CD4-positive, alpha-beta memory T cell (primary cell): ENCODE measurements at regions of chr17 and their contacts with region 1.

Region 1: DNA sequence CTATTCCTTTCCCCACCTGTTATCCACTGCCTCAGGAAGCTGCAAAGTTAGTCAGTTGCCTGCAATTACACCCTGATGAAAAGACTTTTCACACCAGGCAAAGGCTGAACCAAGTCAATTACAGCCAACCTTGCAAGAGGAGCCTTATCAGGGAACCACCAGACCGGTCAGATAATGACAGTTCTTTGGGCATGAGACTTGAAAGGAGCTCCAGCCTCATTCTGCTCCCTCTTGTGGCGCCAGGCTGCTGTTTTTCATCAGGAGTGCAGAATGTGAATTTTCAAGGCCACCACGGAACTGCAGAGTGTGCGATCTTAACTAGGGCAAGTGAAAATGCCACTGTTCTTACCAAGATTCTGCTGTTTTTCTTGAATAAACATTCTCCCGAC is 22.5 kb downstream of the DNAI2 start:
- DNase-seq: peak in 4 of 5 donors; percentile 43 to 46 (median 44)
- H3K4me3 ChIP-seq: no peak overlapping the region
- H3K4me3 Mint-ChIP-seq: peak overlapping the region in 2 of 8 donors; percentile 27 to 35
- H3K27ac ChIP-seq: no peak overlapping the region
- H3K27ac Mint-ChIP-seq: peak overlapping the region in 6 of 7 donors; percentile 21 to 84 (median 62)
- H3K4me1 ChIP-seq: peaks cover 15% of the 10 kb centered on the region
- H3K4me1 Mint-ChIP-seq: peaks cover 17 to 30% (median 25%) of the 10 kb centered on the region in 4 donors
- H3K27me3 ChIP-seq: no peaks in the 10 kb centered on the region
- H3K27me3 Mint-ChIP-seq: no peaks in the 10 kb centered on the region

Region 2: DNA sequence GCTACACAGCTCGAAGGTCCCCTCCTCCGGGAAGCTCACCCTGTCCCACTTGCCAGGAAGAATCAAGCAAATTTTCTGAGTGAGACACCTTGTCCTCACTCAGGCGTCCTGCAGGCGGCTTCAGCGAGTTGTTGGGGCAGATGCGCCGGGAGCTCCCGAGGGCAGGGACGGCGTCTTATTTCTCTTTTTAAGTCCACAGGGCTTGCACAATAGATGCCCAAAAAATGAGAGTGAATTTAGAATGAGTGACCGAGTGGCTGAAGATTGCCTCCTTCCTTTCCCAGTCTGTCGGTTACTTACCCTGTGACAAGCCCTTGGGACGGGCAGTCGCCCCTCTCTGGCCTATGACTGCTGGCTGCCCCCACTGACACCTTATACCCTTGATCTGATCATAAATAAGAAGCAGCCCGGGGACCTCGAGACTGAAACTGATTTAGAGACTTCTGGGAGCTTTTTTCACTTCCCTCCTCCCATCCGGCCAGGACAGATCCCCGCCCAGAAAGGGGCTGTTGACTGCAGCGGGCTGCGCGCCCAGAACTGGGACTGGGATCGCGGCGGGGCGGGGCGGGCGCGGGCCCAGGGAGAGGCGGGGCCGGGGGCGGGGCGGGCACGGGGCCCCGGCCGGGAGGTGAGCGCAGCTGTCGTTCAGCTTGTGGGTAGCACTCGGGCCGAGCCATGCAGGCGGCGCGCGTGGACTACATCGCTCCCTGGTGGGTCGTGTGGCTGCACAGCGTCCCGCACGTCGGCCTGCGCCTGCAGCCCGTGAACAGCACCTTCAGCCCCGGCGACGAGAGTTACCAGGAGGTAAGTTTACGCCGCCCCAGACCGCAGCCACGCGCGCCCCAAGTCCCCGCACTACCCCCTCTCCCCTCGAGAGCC is 83.4 kb before region 1 on chr17 and contains the start of gene TTYH2:
- CTCF ChIA-PET with region 1: interaction called, 230 read pairs
- POLR2A ChIA-PET with region 1: interaction called, 38 read pairs
- intact Hi-C with region 1: loop called (anchors 1 kb)
- DNase-seq: peak; percentile 65 to 83 (median 71)
- H3K4me3 ChIP-seq: peak within 1 kb of the TSS; percentile 58
- H3K4me3 Mint-ChIP-seq: peak within 1 kb of the TSS; percentile 83 to 97 (median 91)
- H3K27ac ChIP-seq: peak within 1 kb of the TSS; percentile 52
- H3K27ac Mint-ChIP-seq: peak within 1 kb of the TSS; percentile 84 to 97 (median 92)
- H3K4me1 ChIP-seq: peaks cover 59% of the 10 kb centered on the region
- H3K4me1 Mint-ChIP-seq: peaks cover 26 to 67% (median 46%) of the 10 kb centered on the region in 4 donors
- H3K27me3 ChIP-seq: no peaks in the 10 kb centered on the region
- H3K27me3 Mint-ChIP-seq: no peaks in the 10 kb centered on the region
- total RNA-seq, gene TTYH2: 40.5 to 42.4 TPM

Region 3: DNA sequence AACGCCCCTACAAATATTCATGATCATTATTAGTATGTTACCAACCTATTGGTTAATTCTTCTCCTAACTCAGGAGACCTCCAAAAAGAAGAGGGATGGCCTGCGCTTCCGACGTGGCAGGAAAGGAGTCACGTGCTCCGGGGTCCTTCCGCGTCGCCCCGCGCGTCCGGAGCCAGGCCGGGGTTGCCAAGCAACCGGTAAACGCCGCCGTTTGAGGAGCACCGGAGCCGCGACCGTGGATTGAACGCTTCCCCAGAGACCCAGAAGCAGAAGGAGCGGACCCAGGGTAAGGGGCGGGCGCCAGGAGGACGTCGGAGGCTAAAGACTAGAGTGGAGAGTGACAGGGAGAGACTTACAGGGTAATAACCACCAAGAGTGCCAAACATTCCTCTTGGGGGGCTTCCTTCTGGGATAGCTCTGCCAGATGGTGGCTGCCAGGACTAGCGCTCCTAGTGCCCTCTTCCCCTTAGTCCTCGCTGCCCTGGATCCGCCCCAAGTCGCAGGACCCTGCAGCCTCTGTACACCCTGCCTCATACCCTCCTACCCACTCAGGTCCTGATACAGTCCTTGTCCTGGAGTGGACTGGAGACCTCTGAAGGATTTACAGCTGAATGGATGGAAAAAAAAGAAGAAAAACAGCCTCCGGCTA is 22.4 kb before region 1 on chr17 and contains the start of gene DNAI2:
- CTCF ChIA-PET with region 1: interaction called, 205 read pairs
- POLR2A ChIA-PET with region 1: interaction called, 86 read pairs
- intact Hi-C with region 1: no loop called
- DNase-seq: peak; percentile 19 to 58 (median 45)
- H3K4me3 ChIP-seq: peak within 1 kb of the TSS; percentile 12 to 49
- H3K4me3 Mint-ChIP-seq: peak within 1 kb of the TSS; percentile 73 to 86 (median 84)
- H3K27ac ChIP-seq: peak within 1 kb of the TSS; percentile 20
- H3K27ac Mint-ChIP-seq: peak within 1 kb of the TSS; percentile 92 to 98 (median 95)
- H3K4me1 ChIP-seq: peaks cover 47% of the 10 kb centered on the region
- H3K4me1 Mint-ChIP-seq: peaks cover 28 to 52% (median 40%) of the 10 kb centered on the region in 4 donors
- H3K27me3 ChIP-seq: no peaks in the 10 kb centered on the region
- H3K27me3 Mint-ChIP-seq: no peaks in the 10 kb centered on the region
- total RNA-seq, gene DNAI2: 6.0 to 8.4 TPM

Region 4: GRCh38 chr17:74354123-74354522 is 57.6 kb after region 1 on chr17:
- CTCF ChIA-PET with region 1: interaction called, 11 read pairs
- POLR2A ChIA-PET with region 1: no interaction called
- intact Hi-C with region 1: loop called (anchors 1 kb)
- DNase-seq: peak; percentile 49 to 55 (median 54)
- H3K4me3 ChIP-seq: no peak overlapping the region
- H3K4me3 Mint-ChIP-seq: peak overlapping the region in 3 of 8 donors; percentile 9 to 54 (median 32)
- H3K27ac ChIP-seq: no peak overlapping the region
- H3K27ac Mint-ChIP-seq: no peak overlapping the region
- H3K4me1 ChIP-seq: peaks cover 13% of the 10 kb centered on the region
- H3K4me1 Mint-ChIP-seq: peaks cover 5 to 20% (median 10%) of the 10 kb centered on the region in 4 donors
- H3K27me3 ChIP-seq: peaks cover 25% of the 10 kb centered on the region
- H3K27me3 Mint-ChIP-seq: peaks cover 29 to 31% of the 10 kb centered on the region in 2 donors

Region 5: GRCh38 chr17:74408262-74408661 is 111.7 kb after region 1 on chr17:
- CTCF ChIA-PET with region 1: no interaction called
- POLR2A ChIA-PET with region 1: no interaction called
- intact Hi-C with region 1: no loop called
- DNase-seq: no peak
- H3K4me3 ChIP-seq: no peak overlapping the region
- H3K4me3 Mint-ChIP-seq: no peak overlapping the region
- H3K27ac ChIP-seq: no peak overlapping the region
- H3K27ac Mint-ChIP-seq: no peak overlapping the region
- H3K4me1 ChIP-seq: no peaks in the 10 kb centered on the region
- H3K4me1 Mint-ChIP-seq: no peaks in the 10 kb centered on the region
- H3K27me3 ChIP-seq: no peaks in the 10 kb centered on the region
- H3K27me3 Mint-ChIP-seq: peaks cover 5 to 9% of the 10 kb centered on the region in 2 donors

Region 6: DNA sequence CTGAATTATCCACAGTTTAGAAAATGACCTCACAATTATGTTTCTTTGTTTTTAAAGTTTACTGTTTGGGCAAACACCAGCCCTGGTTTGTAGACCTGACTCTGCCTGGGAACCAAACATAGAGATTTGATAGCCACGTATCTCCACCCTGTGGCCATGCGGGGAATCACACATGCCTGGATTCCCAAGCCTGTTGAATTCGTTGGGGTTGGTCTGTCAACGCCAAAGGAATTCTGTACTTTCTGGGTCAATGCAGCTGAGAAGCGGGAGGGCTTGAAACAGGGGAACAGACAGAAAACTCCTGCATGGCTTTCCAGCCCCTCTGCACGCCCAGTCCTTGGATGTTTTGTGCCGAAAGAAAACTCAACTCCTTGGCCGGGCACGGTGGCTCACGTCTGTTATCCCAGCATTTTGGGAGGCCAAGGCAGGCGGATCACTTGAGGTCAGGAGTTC is 196.9 kb after region 1 on chr17:
- CTCF ChIA-PET with region 1: interaction called, 3 read pairs
- POLR2A ChIA-PET with region 1: no interaction called
- intact Hi-C with region 1: loop called (anchors 1 kb)
- DNase-seq: peak; percentile 58 to 71 (median 65)
- H3K4me3 ChIP-seq: no peak overlapping the region
- H3K4me3 Mint-ChIP-seq: no peak overlapping the region
- H3K27ac ChIP-seq: no peak overlapping the region
- H3K27ac Mint-ChIP-seq: peak overlapping the region in 3 of 7 donors; percentile 12 to 70 (median 43)
- H3K4me1 ChIP-seq: peaks cover 5% of the 10 kb centered on the region
- H3K4me1 Mint-ChIP-seq: peaks cover 9 to 18% (median 12%) of the 10 kb centered on the region in 4 donors
- H3K27me3 ChIP-seq: no peaks in the 10 kb centered on the region
- H3K27me3 Mint-ChIP-seq: peaks cover 0 to 2% of the 10 kb centered on the region in 2 donors